H1 (cell line): ENCODE measurements at regions of chr15 and their contacts with region 1.

Region 1: DNA sequence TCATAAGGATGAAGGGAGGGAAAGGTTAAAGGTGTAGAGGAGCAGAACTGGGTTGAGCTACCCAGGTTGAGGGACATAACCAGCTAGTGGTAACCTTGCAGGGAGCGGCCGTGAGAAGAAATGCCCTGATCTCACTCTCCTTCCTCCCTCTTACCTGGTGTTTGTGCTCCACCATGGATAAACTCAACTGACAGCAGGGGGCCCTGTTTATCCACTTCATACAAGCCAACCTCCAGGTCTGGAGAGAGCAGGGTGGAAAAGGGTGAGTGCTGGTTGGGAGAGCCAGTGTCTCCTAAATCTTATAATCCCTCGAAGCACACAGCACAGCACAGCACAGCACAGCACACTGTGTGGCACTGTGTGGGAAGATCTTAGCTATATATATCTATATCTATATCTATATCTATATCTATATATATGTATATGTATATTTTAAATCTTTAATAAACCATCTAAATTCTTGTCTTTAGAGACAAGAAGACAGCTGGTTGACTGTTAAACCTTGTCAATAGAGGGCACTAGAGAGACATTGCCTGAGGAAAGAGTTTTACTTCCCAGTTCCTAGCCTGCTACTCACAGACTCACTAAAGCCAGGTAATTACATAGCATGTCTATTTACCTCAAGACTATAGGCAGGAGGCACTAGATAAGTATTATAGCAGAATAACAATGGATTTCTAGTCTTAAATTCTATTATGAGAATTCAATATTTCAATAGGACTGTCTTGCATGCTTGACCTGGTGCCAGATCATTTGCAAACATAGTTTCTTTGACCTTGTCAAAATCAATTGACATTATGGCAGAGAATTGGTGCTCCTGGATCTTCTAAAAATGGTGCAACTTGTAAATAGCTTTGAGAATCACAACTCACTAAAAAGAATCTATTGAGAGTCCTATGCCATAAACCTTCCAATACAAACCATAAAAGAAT is 21.7 kb upstream of the FMN1 start:
- DNase-seq: no peak
- H3K4me3 ChIP-seq: no peak overlapping the region
- H3K27ac ChIP-seq: no peak overlapping the region
- H3K4me1 ChIP-seq: no peaks in the 10 kb centered on the region
- H3K27me3 ChIP-seq: no peaks in the 10 kb centered on the region
- CTCF ChIP-seq: peak in 2 of 3 experiments; percentile 46 to 51; a peak in 2 of 4 replicates
- EP300 ChIP-seq: no peak
- POLR2A ChIP-seq: no peak
- RAD21 ChIP-seq: peak; percentile 40 to 55

Region 2: DNA sequence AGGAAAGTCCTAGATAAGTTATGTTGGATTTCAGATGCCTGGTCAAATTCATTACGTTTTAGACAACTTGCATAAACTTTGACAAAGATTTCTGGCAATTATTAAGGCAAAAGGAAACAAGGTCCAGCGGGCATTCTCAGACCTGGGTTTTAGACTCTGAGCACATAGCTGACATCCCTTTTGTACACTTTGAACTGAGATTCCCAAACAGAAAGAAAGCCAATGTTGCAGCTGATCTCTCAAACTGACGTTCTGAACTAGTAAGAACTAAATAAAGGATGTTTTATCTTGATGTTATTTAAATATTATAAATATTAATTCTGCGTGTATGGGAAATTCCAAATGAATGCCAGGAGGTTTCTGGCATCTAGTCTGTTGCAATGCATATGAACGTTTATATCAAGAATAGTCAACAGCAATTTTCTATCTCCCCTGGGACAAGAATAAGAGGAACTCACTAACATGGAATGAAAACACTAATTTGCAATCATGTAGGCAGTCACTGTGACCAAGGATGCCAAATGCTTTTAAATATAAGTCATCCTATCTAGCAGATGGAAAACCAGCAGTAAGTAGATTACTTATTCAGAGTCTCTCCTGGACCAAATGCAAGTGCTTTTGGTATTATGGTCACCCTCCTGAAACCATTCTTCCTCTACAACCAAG is 296.3 kb before region 1 on chr15:
- CTCF ChIA-PET with region 1: no interaction called
- POLR2A ChIA-PET with region 1: no interaction called
- DNase-seq: no peak
- H3K4me3 ChIP-seq: no peak overlapping the region
- H3K27ac ChIP-seq: no peak overlapping the region
- H3K4me1 ChIP-seq: peaks cover 0 to 6% (median 4%) of the 10 kb centered on the region in 4 experiments; a peak in 2 of 7 replicates
- H3K27me3 ChIP-seq: no peaks in the 10 kb centered on the region
- CTCF ChIP-seq: no peak
- EP300 ChIP-seq: no peak
- POLR2A ChIP-seq: no peak
- RAD21 ChIP-seq: no peak

Region 3: GRCh38 chr15:33154351-33155166 is 61.6 kb before region 1 on chr15:
- CTCF ChIA-PET with region 1: interaction called, 16 read pairs
- POLR2A ChIA-PET with region 1: no interaction called
- DNase-seq: no peak
- H3K4me3 ChIP-seq: no peak overlapping the region
- H3K27ac ChIP-seq: no peak overlapping the region
- H3K4me1 ChIP-seq: no peaks in the 10 kb centered on the region
- H3K27me3 ChIP-seq: no peaks in the 10 kb centered on the region
- CTCF ChIP-seq: no peak
- EP300 ChIP-seq: no peak
- POLR2A ChIP-seq: no peak
- RAD21 ChIP-seq: no peak

Region 4: GRCh38 chr15:33201491-33202231 is 14.5 kb before region 1 on chr15:
- CTCF ChIA-PET with region 1: interaction called, 15 read pairs
- POLR2A ChIA-PET with region 1: interaction called, 3 read pairs
- DNase-seq: peak; percentile 53 to 62
- H3K4me3 ChIP-seq: no peak overlapping the region
- H3K27ac ChIP-seq: no peak overlapping the region
- H3K4me1 ChIP-seq: peaks cover 0 to 5% (median 0%) of the 10 kb centered on the region in 4 experiments; a peak in 2 of 7 replicates
- H3K27me3 ChIP-seq: no peaks in the 10 kb centered on the region
- CTCF ChIP-seq: peak in 1 of 3 experiments; percentile 45; a peak in 1 of 4 replicates
- EP300 ChIP-seq: no peak
- POLR2A ChIP-seq: no peak
- RAD21 ChIP-seq: no peak

Region 5: GRCh38 chr15:33226559-33227181 is 10.5 kb after region 1 on chr15:
- CTCF ChIA-PET with region 1: interaction called, 65 read pairs
- POLR2A ChIA-PET with region 1: no interaction called
- DNase-seq: no peak
- H3K4me3 ChIP-seq: no peak overlapping the region
- H3K27ac ChIP-seq: no peak overlapping the region
- H3K4me1 ChIP-seq: no peaks in the 10 kb centered on the region
- H3K27me3 ChIP-seq: no peaks in the 10 kb centered on the region
- CTCF ChIP-seq: peak in 2 of 3 experiments; percentile 46 to 58; a peak in 3 of 4 replicates
- EP300 ChIP-seq: no peak
- POLR2A ChIP-seq: no peak
- RAD21 ChIP-seq: peak; percentile 26 to 51; a peak in 3 of 4 replicates